Sciatic nerve (tissue), 2 donors: ENCODE measurements at regions of chr13 and their contacts with region 1.

Region 1: GRCh38 chr13:106078191-106078590 is 457.3 kb downstream of the EFNB2 start:
- DNase-seq: no peak
- ATAC-seq: no peak

Region 2: DNA sequence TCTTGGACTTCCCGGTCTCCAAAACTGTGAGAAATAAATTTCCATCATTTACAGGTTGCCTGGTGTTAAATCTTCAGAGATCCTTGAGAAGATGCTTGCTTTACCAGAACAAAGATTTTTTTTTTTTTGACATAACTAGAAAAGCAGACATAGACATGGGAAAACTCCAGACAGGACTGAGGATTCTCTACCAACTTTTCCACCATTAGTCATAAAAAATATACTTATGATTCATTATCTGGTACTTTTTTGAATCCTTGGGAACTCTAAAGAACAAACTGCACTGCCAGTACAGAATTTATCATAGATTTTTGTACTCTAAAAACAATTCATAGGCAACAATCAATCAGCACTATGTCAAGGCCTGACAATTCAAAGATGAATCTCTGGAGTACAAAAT is 30.3 kb before region 1 on chr13:
- intact Hi-C with region 1: loop called (anchors 1 kb)
- DNase-seq: no peak
- ATAC-seq: no peak

Region 3: DNA sequence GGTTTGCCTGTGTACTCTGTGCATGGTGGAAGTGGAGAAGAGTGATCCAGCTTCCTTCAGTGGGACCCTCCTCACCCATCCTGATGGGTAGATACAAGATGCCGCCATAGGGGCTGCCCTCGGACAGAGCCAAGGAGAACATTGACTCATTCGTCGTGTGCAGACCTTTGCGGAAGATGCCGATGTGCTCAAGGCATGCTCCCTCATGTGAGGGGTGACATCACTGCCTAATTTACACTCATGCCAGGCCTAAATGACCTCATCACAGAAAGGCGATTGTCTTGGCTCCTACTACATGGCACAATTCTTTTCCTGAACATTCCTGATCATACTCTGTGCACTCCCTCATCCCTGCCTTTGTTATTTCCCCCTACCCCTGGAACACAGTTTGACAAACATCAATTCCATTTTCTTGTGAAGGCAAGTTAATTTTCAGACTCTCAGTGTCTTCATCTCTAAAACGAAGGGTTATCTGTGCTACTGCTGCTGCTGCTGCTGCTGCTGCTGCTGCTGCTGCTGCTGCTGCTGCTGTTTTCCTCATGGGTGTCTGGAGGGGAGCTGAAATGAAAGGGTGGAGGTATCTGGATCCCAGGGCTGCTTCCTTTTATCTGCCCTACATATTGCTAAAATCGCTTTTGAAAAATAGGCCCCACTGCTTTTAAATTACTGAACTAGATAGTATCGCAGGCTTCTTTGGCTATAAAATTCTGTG is 636.2 kb after region 1 on chr13:
- intact Hi-C with region 1: no loop called
- DNase-seq: no peak
- ATAC-seq: no peak